CD4-positive, alpha-beta memory T cell (primary cell): ENCODE measurements at regions of chr4 and their contacts with region 1.

Region 1: DNA sequence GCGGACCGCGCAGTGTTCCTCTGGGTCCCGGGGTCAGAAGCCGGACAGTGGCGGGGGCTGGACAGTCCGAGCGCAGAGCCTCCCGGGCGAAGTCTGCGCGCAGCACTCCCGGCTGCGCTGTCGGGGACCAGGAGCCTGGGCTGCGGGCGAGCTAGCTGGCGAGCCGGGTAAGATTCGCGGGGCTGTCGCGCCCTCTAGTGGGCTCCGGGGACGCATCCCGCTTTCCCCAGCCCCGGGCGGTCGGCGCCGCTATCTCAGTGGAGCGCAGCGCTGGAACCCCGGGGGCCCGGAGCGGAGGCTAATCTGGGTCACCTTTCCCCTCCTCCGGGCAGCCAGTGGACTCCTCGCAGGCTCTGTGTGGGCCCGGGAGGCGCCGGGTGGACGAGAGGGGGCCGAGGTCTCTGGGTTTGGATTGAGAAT is 4.2 kb downstream of the PDGFRA start:
- DNase-seq: peak; percentile 52 to 68 (median 66)
- H3K4me3 ChIP-seq: peak overlapping the region in 1 of 2 donors; percentile 58
- H3K4me3 Mint-ChIP-seq: peak overlapping the region; percentile 82 to 88 (median 85)
- H3K27ac ChIP-seq: no peak overlapping the region
- H3K27ac Mint-ChIP-seq: no peak overlapping the region
- H3K4me1 ChIP-seq: peaks cover 17% of the 10 kb centered on the region
- H3K4me1 Mint-ChIP-seq: peaks cover 9 to 36% (median 23%) of the 10 kb centered on the region in 4 donors
- H3K27me3 ChIP-seq: peaks cover 13% of the 10 kb centered on the region
- H3K27me3 Mint-ChIP-seq: peaks cover 39 to 48% of the 10 kb centered on the region in 2 donors

Region 2: GRCh38 chr4:52376132-52376704 is 1857.1 kb before region 1 on chr4:
- CTCF ChIA-PET with region 1: interaction called, 16 read pairs
- POLR2A ChIA-PET with region 1: no interaction called
- intact Hi-C with region 1: no loop called
- DNase-seq: peak in 4 of 5 donors; percentile 12 to 27 (median 24)
- H3K4me3 ChIP-seq: no peak overlapping the region
- H3K4me3 Mint-ChIP-seq: no peak overlapping the region
- H3K27ac ChIP-seq: no peak overlapping the region
- H3K27ac Mint-ChIP-seq: no peak overlapping the region
- H3K4me1 ChIP-seq: no peaks in the 10 kb centered on the region
- H3K4me1 Mint-ChIP-seq: no peaks in the 10 kb centered on the region
- H3K27me3 ChIP-seq: no peaks in the 10 kb centered on the region
- H3K27me3 Mint-ChIP-seq: peaks cover 2 to 8% of the 10 kb centered on the region in 2 donors

Region 3: GRCh38 chr4:52983563-52984303 is 1249.6 kb before region 1 on chr4:
- CTCF ChIA-PET with region 1: interaction called, 5 read pairs
- POLR2A ChIA-PET with region 1: no interaction called
- intact Hi-C with region 1: loop called (anchors 2 kb)
- DNase-seq: peak in 4 of 5 donors; percentile 37 to 50 (median 40)
- H3K4me3 ChIP-seq: no peak overlapping the region
- H3K4me3 Mint-ChIP-seq: no peak overlapping the region
- H3K27ac ChIP-seq: no peak overlapping the region
- H3K27ac Mint-ChIP-seq: no peak overlapping the region
- H3K4me1 ChIP-seq: no peaks in the 10 kb centered on the region
- H3K4me1 Mint-ChIP-seq: peaks cover 0 to 4% (median 0%) of the 10 kb centered on the region in 4 donors
- H3K27me3 ChIP-seq: no peaks in the 10 kb centered on the region
- H3K27me3 Mint-ChIP-seq: no peaks in the 10 kb centered on the region

Region 4: GRCh38 chr4:53490965-53491622 is 742.2 kb before region 1 on chr4:
- CTCF ChIA-PET with region 1: interaction called, 3 read pairs
- POLR2A ChIA-PET with region 1: no interaction called
- intact Hi-C with region 1: loop called (anchors 2 kb)
- DNase-seq: no peak
- H3K4me3 ChIP-seq: no peak overlapping the region
- H3K4me3 Mint-ChIP-seq: no peak overlapping the region
- H3K27ac ChIP-seq: no peak overlapping the region
- H3K27ac Mint-ChIP-seq: no peak overlapping the region
- H3K4me1 ChIP-seq: no peaks in the 10 kb centered on the region
- H3K4me1 Mint-ChIP-seq: no peaks in the 10 kb centered on the region
- H3K27me3 ChIP-seq: no peaks in the 10 kb centered on the region
- H3K27me3 Mint-ChIP-seq: peaks cover 9 to 20% of the 10 kb centered on the region in 2 donors

Region 5: DNA sequence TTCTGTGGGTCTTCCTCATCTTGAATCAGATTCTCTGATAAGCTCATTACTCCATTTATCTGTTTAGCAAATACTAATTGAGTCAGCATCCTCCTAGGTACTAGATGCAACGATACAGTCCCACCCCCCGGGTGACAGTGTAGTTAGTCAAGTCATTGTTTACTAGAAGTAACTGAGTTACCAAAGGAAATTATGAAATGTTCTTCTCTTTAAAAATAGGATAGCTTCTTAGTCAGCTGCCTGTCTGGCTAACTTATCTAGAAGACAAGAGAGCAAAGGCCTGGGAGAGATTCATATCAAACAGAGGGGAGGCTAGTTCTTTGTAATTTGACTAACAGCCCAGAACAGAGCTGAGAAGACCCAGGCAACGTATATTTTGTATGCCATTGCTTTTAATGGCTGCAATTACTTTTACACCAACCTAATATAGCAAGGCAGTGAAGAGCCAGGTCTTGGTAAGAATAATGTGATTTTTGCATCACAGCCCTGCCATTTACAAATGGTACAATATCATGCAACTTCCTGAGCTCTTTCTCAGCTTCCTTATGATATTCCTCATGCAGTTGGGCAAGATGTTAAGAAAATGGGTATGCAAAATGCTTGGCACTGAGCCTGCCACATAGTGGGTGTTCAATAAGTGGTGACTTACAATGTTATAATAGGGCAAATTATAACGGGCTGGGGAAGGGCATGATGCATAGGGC is 318.8 kb before region 1 on chr4:
- CTCF ChIA-PET with region 1: interaction called, 64 read pairs
- POLR2A ChIA-PET with region 1: no interaction called
- intact Hi-C with region 1: no loop called
- DNase-seq: no peak
- H3K4me3 ChIP-seq: no peak overlapping the region
- H3K4me3 Mint-ChIP-seq: no peak overlapping the region
- H3K27ac ChIP-seq: no peak overlapping the region
- H3K27ac Mint-ChIP-seq: peak overlapping the region in 1 of 7 donors; percentile 49
- H3K4me1 ChIP-seq: no peaks in the 10 kb centered on the region
- H3K4me1 Mint-ChIP-seq: no peaks in the 10 kb centered on the region
- H3K27me3 ChIP-seq: no peaks in the 10 kb centered on the region
- H3K27me3 Mint-ChIP-seq: peaks cover 0 to 4% of the 10 kb centered on the region in 2 donors

Region 6: GRCh38 chr4:54217642-54218495 is 15.4 kb before region 1 on chr4:
- CTCF ChIA-PET with region 1: interaction called, 81 read pairs
- POLR2A ChIA-PET with region 1: no interaction called
- intact Hi-C with region 1: loop called (anchors 1 kb)
- DNase-seq: peak in 4 of 5 donors; percentile 53 to 59 (median 54)
- H3K4me3 ChIP-seq: no peak overlapping the region
- H3K4me3 Mint-ChIP-seq: peak overlapping the region in 3 of 8 donors; percentile 39 to 61 (median 53)
- H3K27ac ChIP-seq: no peak overlapping the region
- H3K27ac Mint-ChIP-seq: no peak overlapping the region
- H3K4me1 ChIP-seq: no peaks in the 10 kb centered on the region
- H3K4me1 Mint-ChIP-seq: peaks cover 4 to 7% (median 5%) of the 10 kb centered on the region in 4 donors
- H3K27me3 ChIP-seq: peaks cover 4% of the 10 kb centered on the region
- H3K27me3 Mint-ChIP-seq: peaks cover 22 to 27% of the 10 kb centered on the region in 2 donors